B cell (primary cell): ENCODE measurements at regions of chr10 and their contacts with region 1.

Region 1: GRCh38 chr10:97025613-97026242 is 160.0 kb downstream of the SLIT1 start:
- DNase-seq: peak; percentile 67
- ATAC-seq: peak; percentile 57
- H3K4me3 ChIP-seq: no peak overlapping the region
- H3K4me3 Mint-ChIP-seq: no peak overlapping the region
- H3K27ac ChIP-seq: no peak overlapping the region
- H3K27ac Mint-ChIP-seq: no peak overlapping the region
- H3K4me1 ChIP-seq: peaks cover 0 to 4% of the 10 kb centered on the region in 2 donors
- H3K4me1 Mint-ChIP-seq: peaks cover 8% of the 10 kb centered on the region
- H3K27me3 ChIP-seq: no peaks in the 10 kb centered on the region
- H3K27me3 Mint-ChIP-seq: peaks cover 5% of the 10 kb centered on the region
- CTCF ChIP-seq: peak; percentile 77

Region 2: GRCh38 chr10:96395931-96396877 is 629.5 kb before region 1 on chr10:
- CTCF ChIA-PET with region 1: interaction called, 12 read pairs
- POLR2A ChIA-PET with region 1: no interaction called
- intact Hi-C with region 1: no loop called
- DNase-seq: peak; percentile 78
- ATAC-seq: peak; percentile 76
- H3K4me3 ChIP-seq: no peak overlapping the region
- H3K4me3 Mint-ChIP-seq: no peak overlapping the region
- H3K27ac ChIP-seq: no peak overlapping the region
- H3K27ac Mint-ChIP-seq: no peak overlapping the region
- H3K4me1 ChIP-seq: peaks cover 0 to 7% of the 10 kb centered on the region in 2 donors
- H3K4me1 Mint-ChIP-seq: peaks cover 1% of the 10 kb centered on the region
- H3K27me3 ChIP-seq: peaks cover 0 to 13% (median 5%) of the 10 kb centered on the region in 4 experiments
- H3K27me3 Mint-ChIP-seq: peaks cover 32% of the 10 kb centered on the region
- CTCF ChIP-seq: peak; percentile 91

Region 3: DNA sequence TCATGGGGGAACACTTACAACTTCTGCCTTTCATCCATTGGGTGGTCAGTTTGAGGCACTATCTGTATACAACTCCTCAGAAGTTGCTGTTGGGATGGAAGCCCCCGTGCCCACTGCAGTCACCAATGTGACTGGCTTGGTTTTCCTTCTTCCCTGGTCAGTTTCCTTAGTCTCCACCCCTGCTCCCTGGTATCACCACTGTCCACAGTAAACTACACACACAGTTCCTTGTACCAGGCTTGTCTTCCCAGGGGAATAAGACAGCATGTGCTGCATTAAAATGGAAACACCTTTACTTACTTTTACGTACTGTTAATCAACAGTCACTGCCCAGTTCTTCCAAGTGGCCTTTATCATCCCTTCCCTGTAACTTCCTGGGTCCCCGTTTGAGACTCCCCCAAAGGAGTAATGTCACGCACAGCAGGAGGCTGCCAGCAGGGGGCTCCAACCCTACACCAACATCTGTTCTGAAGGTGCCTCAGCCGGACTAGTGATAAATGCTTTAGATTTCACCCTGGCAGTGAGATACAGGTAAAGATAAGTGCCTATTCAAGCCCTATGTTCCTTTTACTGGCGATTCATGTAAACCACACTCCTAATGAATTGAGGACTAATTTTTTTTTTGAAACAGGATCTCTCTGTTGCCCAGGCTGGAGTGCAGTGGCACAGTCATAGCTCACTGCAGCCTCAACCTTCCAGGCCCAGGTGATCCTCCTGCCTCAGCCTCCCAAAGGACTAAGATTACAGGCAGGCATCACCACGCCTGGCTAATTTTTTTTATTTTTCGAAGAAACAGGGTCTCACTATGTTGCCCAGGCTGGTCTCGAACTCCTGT is 260.1 kb before region 1 on chr10:
- CTCF ChIA-PET with region 1: interaction called, 11 read pairs
- POLR2A ChIA-PET with region 1: no interaction called
- intact Hi-C with region 1: loop called (anchors 10 kb)
- DNase-seq: peak; percentile 83
- ATAC-seq: peak; percentile 74
- H3K4me3 ChIP-seq: no peak overlapping the region
- H3K4me3 Mint-ChIP-seq: peak overlapping the region; percentile 60
- H3K27ac ChIP-seq: peak overlapping the region; percentile 30 to 54
- H3K27ac Mint-ChIP-seq: peak overlapping the region; percentile 77
- H3K4me1 ChIP-seq: peaks cover 33% of the 10 kb centered on the region in 2 donors
- H3K4me1 Mint-ChIP-seq: peaks cover 39% of the 10 kb centered on the region
- H3K27me3 ChIP-seq: no peaks in the 10 kb centered on the region
- H3K27me3 Mint-ChIP-seq: no peaks in the 10 kb centered on the region
- CTCF ChIP-seq: peak; percentile 90

Region 4: GRCh38 chr10:96910488-96911395 is 115.0 kb before region 1 on chr10:
- CTCF ChIA-PET with region 1: interaction called, 13 read pairs
- POLR2A ChIA-PET with region 1: no interaction called
- intact Hi-C with region 1: no loop called
- DNase-seq: peak; percentile 63
- ATAC-seq: peak; percentile 53
- H3K4me3 ChIP-seq: no peak overlapping the region
- H3K4me3 Mint-ChIP-seq: no peak overlapping the region
- H3K27ac ChIP-seq: peak overlapping the region in 1 of 2 donors; percentile 33
- H3K27ac Mint-ChIP-seq: no peak overlapping the region
- H3K4me1 ChIP-seq: no peaks in the 10 kb centered on the region
- H3K4me1 Mint-ChIP-seq: peaks cover 13% of the 10 kb centered on the region
- H3K27me3 ChIP-seq: no peaks in the 10 kb centered on the region
- H3K27me3 Mint-ChIP-seq: no peaks in the 10 kb centered on the region
- CTCF ChIP-seq: peak; percentile 91

Region 5: DNA sequence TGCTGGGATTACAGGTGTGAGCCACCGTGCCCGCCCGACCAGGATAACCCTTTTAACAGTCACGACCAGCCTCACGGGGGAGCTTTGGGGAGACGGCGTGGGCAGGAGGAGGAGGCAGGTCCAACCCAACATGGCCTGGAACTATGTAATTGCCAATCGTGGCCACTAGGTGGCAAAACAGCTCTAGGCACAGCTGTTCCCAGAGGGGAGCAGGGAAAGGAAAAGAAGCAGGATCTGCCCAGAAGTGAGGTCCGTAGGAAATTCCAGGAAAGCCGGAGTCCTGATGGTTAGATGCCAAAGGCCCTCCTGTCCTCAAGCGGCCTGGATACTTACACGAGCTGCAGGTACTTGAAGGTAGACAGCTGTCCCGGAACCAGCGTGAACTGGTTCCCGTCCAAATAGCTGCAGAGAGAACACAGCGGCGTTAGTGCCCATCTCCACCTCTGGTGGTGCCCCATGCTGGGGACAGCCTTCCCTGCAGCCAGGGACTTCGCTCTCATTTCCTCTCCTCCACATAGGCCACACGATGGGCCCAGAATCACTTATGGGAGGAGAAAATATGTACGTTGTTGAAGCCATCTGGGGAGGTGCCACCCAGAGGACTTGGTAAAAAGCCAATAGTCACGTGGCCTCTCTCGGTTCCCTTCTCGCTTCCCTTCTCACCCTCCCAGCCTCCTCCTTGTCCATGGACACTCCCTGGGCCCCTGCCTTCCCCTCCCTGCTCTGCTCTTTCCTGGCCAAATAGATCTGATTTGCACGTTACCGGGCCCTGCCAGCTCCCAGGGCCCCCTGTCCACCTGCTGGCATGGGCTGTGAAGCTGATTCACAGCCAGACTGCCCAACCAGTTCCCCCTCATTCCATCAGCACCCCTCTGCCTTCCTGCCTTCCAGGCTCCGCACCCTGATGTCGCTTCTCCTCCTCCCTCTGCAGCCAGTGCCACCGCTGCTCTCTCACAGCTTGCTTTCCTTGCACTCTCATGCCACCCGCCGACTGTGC is 11.9 kb after region 1 on chr10:
- CTCF ChIA-PET with region 1: interaction called, 29 read pairs
- POLR2A ChIA-PET with region 1: interaction called, 3 read pairs
- intact Hi-C with region 1: no loop called
- DNase-seq: peak; percentile 83
- ATAC-seq: peak; percentile 97
- H3K4me3 ChIP-seq: peak overlapping the region; percentile 44 to 58 (median 50)
- H3K4me3 Mint-ChIP-seq: peak overlapping the region; percentile 86
- H3K27ac ChIP-seq: no peak overlapping the region
- H3K27ac Mint-ChIP-seq: peak overlapping the region; percentile 62
- H3K4me1 ChIP-seq: peaks cover 7 to 10% of the 10 kb centered on the region in 2 donors
- H3K4me1 Mint-ChIP-seq: peaks cover 18% of the 10 kb centered on the region
- H3K27me3 ChIP-seq: peaks cover 0 to 3% (median 0%) of the 10 kb centered on the region in 4 experiments
- H3K27me3 Mint-ChIP-seq: peaks cover 16% of the 10 kb centered on the region
- CTCF ChIP-seq: peak; percentile 92